Caco-2 (cell line): ENCODE measurements at regions of chr1 and their contacts with region 1.

Region 1: DNA sequence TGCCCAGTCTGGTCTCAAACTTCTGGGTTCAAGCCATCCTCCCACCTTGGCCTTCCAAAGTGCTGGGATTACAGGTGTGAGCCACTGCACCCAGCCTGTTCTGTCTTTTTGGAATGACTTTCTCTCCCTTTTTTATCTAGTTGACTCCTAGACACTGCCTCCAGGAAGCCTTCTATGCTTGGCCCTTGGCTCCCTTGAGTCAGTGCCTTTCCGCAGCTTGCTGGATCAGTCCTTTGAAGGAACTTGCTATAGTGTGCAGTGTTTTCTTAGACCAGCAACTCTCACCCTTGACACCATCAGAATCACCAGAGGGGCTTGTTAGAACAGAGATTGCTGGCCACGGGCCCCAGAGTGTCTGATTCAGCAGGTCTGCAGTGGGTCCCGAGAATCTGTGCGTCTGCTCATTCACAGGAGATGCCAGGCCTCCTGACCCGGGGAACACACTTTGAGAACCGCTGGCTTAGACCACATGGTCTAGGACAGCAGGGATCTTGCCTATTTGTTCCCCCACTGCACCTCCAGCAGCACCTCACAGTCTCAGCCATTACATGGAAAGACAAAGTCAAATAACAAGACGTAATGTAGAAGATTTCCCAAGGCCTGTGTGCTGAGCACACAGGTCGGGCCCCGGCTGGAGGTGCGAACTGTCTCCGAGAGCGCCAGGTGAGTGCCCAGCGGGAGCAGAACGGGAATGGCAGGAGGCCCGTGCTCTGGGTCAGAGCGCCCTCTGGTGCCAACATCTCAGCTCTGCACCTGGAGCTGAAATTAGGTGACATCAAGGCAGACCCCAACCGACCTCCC is 27.4 kb upstream of the CTPS1 start:
- DNase-seq: peak; percentile 73 to 79
- H3K4me3 ChIP-seq: no peak overlapping the region
- H3K4me3 Mint-ChIP-seq: no peak overlapping the region
- H3K27ac Mint-ChIP-seq: no peak overlapping the region
- H3K4me1 ChIP-seq: peaks cover 7% of the 10 kb centered on the region; the same call in 1 of the 2 replicates
- H3K4me1 Mint-ChIP-seq: peaks cover 18% of the 10 kb centered on the region
- H3K27me3 ChIP-seq: no peaks in the 10 kb centered on the region
- H3K27me3 Mint-ChIP-seq: no peaks in the 10 kb centered on the region
- CTCF ChIP-seq: peak; percentile 78 to 87

Region 2: DNA sequence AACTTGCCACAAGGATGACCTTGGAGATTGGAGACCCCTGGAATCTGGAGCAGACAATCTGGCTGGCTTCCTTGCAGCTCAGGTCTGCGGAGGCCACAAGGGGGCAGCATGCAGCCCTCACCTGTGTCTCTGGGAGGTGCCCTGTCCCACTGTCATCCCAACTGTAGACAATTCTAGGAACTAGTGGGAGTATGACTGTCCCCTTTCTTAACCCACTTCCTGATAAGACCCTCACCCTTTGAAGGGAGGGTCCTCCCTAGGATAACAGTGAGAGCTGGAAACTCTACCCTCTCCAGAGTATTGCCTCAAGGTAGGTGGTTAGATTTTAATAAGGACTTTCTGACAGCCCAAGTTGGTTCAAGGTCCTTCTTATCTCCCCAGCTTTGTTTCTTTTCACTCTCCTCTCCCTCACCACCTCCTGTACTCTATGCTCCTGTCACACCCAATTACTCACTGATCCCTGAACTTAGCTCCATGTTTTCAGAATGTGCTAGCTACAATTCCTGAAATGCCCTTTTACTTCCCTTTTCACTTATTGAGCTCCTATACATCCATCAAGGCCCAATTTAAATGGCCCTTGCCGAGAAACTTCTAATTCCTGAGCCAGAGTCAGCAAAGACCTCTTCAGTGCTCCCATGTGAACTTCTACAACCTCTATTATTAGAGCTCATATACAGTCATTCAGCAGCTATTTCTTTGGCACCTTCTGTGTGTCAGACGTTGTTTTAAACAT is 177.7 kb before region 1 on chr1:
- CTCF ChIA-PET with region 1: interaction called, 3 read pairs
- POLR2A ChIA-PET with region 1: no interaction called
- intact Hi-C with region 1: loop called (anchors 2 kb)
- DNase-seq: peak; percentile 53 to 74
- H3K4me3 ChIP-seq: no peak overlapping the region
- H3K4me3 Mint-ChIP-seq: no peak overlapping the region
- H3K27ac Mint-ChIP-seq: no peak overlapping the region
- H3K4me1 ChIP-seq: no peaks in the 10 kb centered on the region
- H3K4me1 Mint-ChIP-seq: no peaks in the 10 kb centered on the region
- H3K27me3 ChIP-seq: no peaks in the 10 kb centered on the region
- H3K27me3 Mint-ChIP-seq: no peaks in the 10 kb centered on the region
- CTCF ChIP-seq: peak; percentile 66 to 72

Region 3: DNA sequence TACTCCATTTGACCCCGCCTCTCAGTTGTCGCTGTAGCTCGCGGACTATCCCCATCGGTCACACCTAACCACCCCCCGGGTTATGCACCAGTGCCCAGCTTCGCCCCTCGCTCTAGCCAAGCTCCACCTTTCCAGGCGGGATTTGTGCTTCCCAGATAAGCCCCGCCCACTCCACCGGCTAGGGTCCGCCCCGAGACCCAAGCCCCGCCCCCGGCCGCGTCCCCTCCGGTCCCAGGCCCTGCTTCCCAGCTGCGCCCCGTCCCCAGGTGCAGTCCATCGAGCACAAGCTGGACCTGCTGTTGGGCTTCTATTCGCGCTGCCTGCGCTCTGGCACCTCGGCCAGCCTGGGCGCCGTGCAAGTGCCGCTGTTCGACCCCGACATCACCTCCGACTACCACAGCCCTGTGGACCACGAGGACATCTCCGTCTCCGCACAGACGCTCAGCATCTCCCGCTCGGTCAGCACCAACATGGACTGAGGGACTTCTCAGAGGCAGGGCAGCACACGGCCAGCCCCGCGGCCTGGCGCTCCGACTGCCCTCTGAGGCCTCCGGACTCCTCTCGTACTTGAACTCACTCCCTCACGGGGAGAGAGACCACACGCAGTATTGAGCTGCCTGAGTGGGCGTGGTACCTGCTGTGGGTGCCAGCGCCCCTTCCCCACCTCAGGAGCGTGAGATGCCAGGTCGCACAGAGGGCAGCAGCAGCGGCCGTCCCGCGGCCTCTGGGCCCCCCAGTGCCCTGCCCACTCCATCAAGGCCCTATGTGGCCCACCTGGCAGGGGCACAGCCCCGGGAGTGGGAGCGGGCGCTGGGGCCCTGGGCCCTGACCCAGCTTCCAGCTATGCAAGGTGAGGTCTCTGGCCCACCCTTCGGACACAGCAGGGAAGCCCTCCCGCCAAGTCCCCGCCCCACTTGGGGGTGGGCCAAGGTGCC is 113.8 kb before region 1 on chr1:
- CTCF ChIA-PET with region 1: no interaction called
- POLR2A ChIA-PET with region 1: no interaction called
- intact Hi-C with region 1: no loop called
- DNase-seq: no peak
- H3K4me3 ChIP-seq: no peak overlapping the region
- H3K4me3 Mint-ChIP-seq: no peak overlapping the region
- H3K27ac Mint-ChIP-seq: no peak overlapping the region
- H3K4me1 ChIP-seq: no peaks in the 10 kb centered on the region
- H3K4me1 Mint-ChIP-seq: no peaks in the 10 kb centered on the region
- H3K27me3 ChIP-seq: no peaks in the 10 kb centered on the region
- H3K27me3 Mint-ChIP-seq: no peaks in the 10 kb centered on the region
- CTCF ChIP-seq: no peak

Region 4: GRCh38 chr1:40849801-40850592 is 102.1 kb before region 1 on chr1:
- CTCF ChIA-PET with region 1: interaction called, 12 read pairs
- POLR2A ChIA-PET with region 1: no interaction called
- intact Hi-C with region 1: loop called (anchors 1 kb)
- DNase-seq: peak; percentile 57 to 68
- H3K4me3 ChIP-seq: no peak overlapping the region
- H3K4me3 Mint-ChIP-seq: no peak overlapping the region
- H3K27ac Mint-ChIP-seq: peak overlapping the region; percentile 32
- H3K4me1 ChIP-seq: no peaks in the 10 kb centered on the region
- H3K4me1 Mint-ChIP-seq: peaks cover 15% of the 10 kb centered on the region
- H3K27me3 ChIP-seq: no peaks in the 10 kb centered on the region
- H3K27me3 Mint-ChIP-seq: no peaks in the 10 kb centered on the region
- CTCF ChIP-seq: peak; percentile 58 to 59

Region 5: DNA sequence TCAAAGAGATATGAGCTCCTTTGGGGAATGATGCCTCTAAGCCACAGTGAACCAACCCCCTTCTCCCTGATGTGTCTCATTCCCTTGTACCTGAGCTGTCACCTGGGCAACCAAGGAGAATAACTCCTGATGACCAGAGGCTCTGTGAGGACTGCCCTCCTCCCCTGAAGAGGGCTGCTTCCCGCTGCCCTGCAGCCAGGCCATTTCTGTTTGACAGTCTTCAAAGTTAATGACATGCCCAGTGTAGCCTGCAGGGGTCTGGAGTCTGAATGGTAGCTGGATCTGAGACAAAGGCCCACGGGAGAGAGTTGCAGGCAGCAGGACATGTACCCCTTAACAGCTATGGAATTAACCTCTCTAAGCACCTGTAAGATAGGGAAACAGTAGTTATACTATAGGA is 72.8 kb after region 1 on chr1:
- CTCF ChIA-PET with region 1: no interaction called
- POLR2A ChIA-PET with region 1: no interaction called
- intact Hi-C with region 1: no loop called
- DNase-seq: no peak
- H3K4me3 ChIP-seq: no peak overlapping the region
- H3K4me3 Mint-ChIP-seq: no peak overlapping the region
- H3K27ac Mint-ChIP-seq: peak overlapping the region; percentile 50
- H3K4me1 ChIP-seq: no peaks in the 10 kb centered on the region
- H3K4me1 Mint-ChIP-seq: peaks cover 7% of the 10 kb centered on the region
- H3K27me3 ChIP-seq: no peaks in the 10 kb centered on the region
- H3K27me3 Mint-ChIP-seq: no peaks in the 10 kb centered on the region
- CTCF ChIP-seq: no peak